ENCODE measurements at regions of chr13 and their contacts with region 1.

Region 1: DNA sequence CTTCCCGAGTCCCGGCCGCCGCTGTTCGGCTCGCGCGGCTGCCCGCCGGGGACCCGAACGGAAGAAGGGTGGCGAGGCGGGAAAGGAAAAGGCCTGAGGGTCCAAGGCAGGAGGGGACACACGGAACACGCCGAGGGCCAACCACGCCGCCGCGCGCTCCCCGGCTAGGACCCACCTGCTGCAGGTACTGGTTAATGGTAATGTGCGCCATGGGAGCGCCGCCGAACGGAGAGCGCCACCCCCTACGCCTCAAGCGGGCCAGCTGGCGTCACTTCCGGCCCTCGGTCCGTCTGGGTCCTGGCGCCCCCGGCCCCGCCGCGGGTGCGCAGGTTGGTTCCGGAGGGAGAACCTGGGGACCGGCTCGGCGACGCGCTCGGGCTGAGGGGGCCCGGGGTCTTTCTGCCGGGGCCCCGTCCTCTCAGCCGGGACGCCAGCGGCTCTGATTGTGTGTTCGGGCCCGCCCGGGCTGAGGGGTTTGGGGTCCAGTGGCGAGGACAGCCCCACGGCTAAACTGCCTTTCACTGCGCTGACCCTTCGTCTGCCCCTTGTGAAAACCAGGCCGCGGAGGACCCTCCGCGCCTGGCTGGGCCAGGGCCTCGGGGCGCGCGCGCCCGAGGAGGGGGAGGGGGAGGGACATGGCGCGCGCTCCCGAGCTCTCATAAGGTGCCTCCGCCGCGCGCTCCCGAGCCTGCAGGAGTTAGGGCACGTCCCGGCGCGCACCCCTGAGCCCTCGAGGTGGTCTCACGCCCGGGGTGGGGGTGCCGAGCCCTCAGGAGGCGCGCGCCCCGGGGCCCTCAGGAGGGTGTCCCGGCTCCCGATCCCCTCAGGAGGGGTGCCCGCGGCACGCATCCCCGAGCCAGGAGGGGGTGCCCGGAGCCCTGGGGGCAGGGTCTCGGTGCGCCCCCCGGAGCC is at the start of gene PCID2:
- DNase-seq: peak; percentile 84 to 95 (median 91)
- ATAC-seq: peak; percentile 68 to 71
- H3K4me3 Mint-ChIP-seq: peak within 1 kb of the TSS; percentile 73 to 95 (median 90)
- H3K27ac Mint-ChIP-seq: peak within 1 kb of the TSS; percentile 76 to 96 (median 92)
- H3K4me1 Mint-ChIP-seq: peaks cover 35 to 50% (median 40%) of the 10 kb centered on the region in 4 donors
- H3K27me3 Mint-ChIP-seq: no peaks in the 10 kb centered on the region
- polyA plus RNA-seq, gene PCID2: 64.6 to 68.6 (median 66.9) TPM

Region 2: DNA sequence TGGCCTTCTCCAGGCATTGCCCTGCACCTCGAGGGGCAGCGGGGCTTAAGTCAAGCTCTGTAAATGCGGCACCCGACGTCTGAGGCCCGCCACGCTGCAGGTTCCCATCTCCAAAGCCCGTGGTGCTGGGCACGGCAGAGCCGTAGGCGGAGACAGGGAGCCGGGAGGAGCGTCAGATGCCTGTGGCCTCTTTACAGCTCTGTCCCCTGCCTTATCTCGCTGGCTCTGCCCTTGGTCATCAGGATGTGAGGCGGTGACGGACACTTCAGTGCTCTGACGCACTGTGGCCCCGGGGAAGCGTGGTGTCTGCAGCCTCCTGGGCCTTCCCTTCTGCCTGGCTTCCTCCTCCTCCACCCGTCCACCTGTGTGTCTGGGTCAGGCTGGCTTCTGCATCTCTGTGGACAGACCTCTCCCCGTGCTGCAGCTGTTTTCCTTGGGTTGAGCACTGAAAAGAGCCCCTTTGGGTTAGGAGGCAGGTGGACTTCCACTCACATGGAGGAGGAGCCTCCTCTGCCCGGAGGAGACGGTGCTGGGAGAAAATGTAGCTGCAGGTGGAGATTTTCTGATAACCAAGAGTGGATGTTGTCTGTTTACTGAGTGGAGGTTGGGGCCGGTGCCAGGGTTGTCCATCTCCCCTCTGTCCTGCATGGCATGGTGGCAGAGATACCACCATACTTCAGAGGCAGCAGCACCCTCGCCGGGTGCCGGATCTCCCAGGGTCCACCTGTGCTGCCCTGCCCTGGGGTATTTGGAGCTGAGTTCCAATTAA is 225.1 kb before region 1 on chr13:
- POLR2A ChIA-PET with region 1: no interaction called
- DNase-seq: no peak
- ATAC-seq: no peak
- H3K4me3 Mint-ChIP-seq: no peak overlapping the region
- H3K27ac Mint-ChIP-seq: no peak overlapping the region
- H3K4me1 Mint-ChIP-seq: peaks cover 6 to 31% (median 14%) of the 10 kb centered on the region in 4 donors
- H3K27me3 Mint-ChIP-seq: no peaks in the 10 kb centered on the region

Region 3: DNA sequence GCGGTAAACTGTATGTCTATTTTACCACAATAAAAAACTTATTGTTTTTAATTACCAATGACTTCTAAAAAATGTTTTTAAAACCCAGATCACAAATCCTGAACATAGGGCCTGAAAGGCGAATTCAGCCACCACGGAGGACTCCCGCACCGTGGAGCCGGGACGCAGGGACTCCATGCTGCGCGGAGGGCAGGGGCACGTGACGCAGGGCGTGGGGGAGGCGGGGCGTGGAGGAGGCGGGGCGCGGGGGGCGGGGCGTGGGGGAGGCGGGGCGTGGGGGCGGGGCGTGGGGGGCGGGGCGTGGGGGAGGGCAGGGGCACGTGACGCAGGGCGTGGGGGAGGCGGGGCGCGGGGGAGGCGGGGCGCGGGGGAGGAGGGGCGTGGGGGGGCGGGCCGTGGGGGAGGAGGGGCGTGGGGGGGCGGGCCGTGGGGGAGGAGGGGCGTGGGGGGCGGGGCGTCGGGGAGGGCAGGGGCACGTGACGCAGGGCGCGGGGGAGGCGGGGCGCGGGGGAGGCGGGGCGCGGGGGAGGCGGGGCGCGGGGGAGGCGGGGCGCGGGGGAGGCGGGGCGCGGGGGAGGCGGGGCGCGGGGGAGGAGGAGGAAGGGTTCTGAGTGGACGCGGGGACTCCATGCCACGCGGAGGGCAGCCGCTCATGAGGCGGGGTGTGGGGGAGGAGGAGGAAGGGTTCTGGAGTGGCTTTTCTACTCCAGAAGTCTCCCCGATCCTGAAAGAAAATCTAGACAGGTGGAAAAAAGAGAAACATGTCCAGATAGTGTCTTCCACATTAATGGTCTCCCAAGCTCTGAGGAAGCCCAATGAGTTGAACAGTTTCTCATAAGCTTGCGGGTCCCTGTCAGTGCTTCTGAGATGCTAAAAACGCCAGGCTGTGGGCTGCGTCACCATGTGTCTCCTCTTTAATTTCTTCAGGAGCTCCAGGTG is 54.6 kb before region 1 on chr13:
- POLR2A ChIA-PET with region 1: interaction called, 27 read pairs
- DNase-seq: peak; percentile 60 to 89 (median 72)
- ATAC-seq: peak; percentile 81 to 83
- H3K4me3 Mint-ChIP-seq: peak overlapping the region; percentile 79 to 91 (median 86)
- H3K27ac Mint-ChIP-seq: peak overlapping the region; percentile 72 to 92 (median 88)
- H3K4me1 Mint-ChIP-seq: peaks cover 18 to 27% (median 20%) of the 10 kb centered on the region in 4 donors
- H3K27me3 Mint-ChIP-seq: peaks cover 0 to 14% (median 7%) of the 10 kb centered on the region in 5 donors

Region 4: GRCh38 chr13:113296842-113297369 is 88.2 kb after region 1 on chr13 and contains the start of gene LAMP1:
- POLR2A ChIA-PET with region 1: interaction called, 17 read pairs
- DNase-seq: peak; percentile 97 to 100 (median 100)
- ATAC-seq: peak; percentile 83 to 85
- H3K4me3 Mint-ChIP-seq: peak within 1 kb of the TSS; percentile 77 to 99 (median 98)
- H3K27ac Mint-ChIP-seq: peak within 1 kb of the TSS; percentile 96 to 100 (median 99)
- H3K4me1 Mint-ChIP-seq: peaks cover 22 to 49% (median 42%) of the 10 kb centered on the region in 4 donors
- H3K27me3 Mint-ChIP-seq: peaks cover 3 to 21% (median 12%) of the 10 kb centered on the region in 5 donors
- polyA plus RNA-seq, gene LAMP1: 22.7 to 28.1 (median 23.0) TPM

Measured in naive thymus-derived CD8-positive, alpha-beta T cell (primary cell).